Ascending aorta (tissue), 2 donors: ENCODE measurements at regions of chr1 and their contacts with region 1.

Region 1: DNA sequence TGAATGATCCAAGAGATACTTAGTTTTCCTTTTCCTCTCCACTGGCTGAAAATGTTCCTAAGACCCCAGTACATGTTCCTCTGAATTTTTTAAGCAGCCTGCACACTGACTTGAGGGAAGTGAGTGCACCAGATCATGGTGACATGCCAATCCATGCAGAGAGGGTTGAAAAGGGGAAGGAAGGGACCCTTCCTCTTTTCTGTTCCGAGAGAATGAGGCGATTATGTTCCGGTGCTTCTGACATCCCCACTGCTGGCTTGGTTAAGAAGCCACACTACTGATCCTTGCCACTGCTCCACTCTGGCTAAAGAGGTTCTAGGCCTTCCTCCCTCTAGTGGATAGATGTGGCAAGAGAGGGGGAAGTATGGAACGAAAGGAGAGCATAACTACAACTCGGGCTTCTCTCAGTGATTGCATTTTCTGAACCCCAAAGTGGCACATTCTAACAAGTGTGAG is 1.8 kb upstream of the CYB5R1 start:
- DNase-seq: peak; percentile 41 to 76
- H3K4me3 ChIP-seq: peak overlapping the region in 1 of 2 donors; percentile 99
- H3K27ac ChIP-seq: peak overlapping the region; percentile 94 to 99
- H3K4me1 ChIP-seq: peaks cover 4 to 19% of the 10 kb centered on the region in 2 donors
- H3K27me3 ChIP-seq: no peaks in the 10 kb centered on the region
- CTCF ChIP-seq: peak; percentile 42 to 54 (median 46)

Region 2: GRCh38 chr1:202861420-202862200 is 107.3 kb before region 1 on chr1:
- intact Hi-C with region 1: loop called (anchors 5 kb)
- DNase-seq: peak; percentile 72 to 95
- H3K4me3 ChIP-seq: peak overlapping the region; percentile 72 to 89
- H3K27ac ChIP-seq: no peak overlapping the region
- H3K4me1 ChIP-seq: peaks cover 3 to 5% of the 10 kb centered on the region in 2 donors
- H3K27me3 ChIP-seq: no peaks in the 10 kb centered on the region
- CTCF ChIP-seq: no peak

Region 3: GRCh38 chr1:202957733-202958543 is 10.9 kb before region 1 on chr1 and contains the start of gene ADIPOR1:
- intact Hi-C with region 1: loop called (anchors 1 kb)
- DNase-seq: peak; percentile 59 to 94
- H3K4me3 ChIP-seq: peak within 1 kb of the TSS; percentile 80 to 94
- H3K27ac ChIP-seq: peak within 1 kb of the TSS; percentile 95 to 96
- H3K4me1 ChIP-seq: peaks cover 3 to 21% of the 10 kb centered on the region in 2 donors
- H3K27me3 ChIP-seq: no peaks in the 10 kb centered on the region
- CTCF ChIP-seq: peak in 2 of 3 experiments; percentile 17 to 29
- total RNA-seq, gene ADIPOR1: 67.9 TPM

Region 4: GRCh38 chr1:203006948-203007871 is 38.3 kb after region 1 on chr1 and contains the start of gene TMEM183A:
- intact Hi-C with region 1: loop called (anchors 2 kb)
- DNase-seq: peak; percentile 83 to 97
- H3K4me3 ChIP-seq: peak within 1 kb of the TSS; percentile 78 to 89
- H3K27ac ChIP-seq: peak within 1 kb of the TSS; percentile 79 to 95
- H3K4me1 ChIP-seq: peaks cover 6 to 14% of the 10 kb centered on the region in 2 donors
- H3K27me3 ChIP-seq: no peaks in the 10 kb centered on the region
- CTCF ChIP-seq: no peak
- total RNA-seq, gene TMEM183A: 44.6 TPM